ENCODE measurements at regions of chr2 and their contacts with region 1.

Region 1: DNA sequence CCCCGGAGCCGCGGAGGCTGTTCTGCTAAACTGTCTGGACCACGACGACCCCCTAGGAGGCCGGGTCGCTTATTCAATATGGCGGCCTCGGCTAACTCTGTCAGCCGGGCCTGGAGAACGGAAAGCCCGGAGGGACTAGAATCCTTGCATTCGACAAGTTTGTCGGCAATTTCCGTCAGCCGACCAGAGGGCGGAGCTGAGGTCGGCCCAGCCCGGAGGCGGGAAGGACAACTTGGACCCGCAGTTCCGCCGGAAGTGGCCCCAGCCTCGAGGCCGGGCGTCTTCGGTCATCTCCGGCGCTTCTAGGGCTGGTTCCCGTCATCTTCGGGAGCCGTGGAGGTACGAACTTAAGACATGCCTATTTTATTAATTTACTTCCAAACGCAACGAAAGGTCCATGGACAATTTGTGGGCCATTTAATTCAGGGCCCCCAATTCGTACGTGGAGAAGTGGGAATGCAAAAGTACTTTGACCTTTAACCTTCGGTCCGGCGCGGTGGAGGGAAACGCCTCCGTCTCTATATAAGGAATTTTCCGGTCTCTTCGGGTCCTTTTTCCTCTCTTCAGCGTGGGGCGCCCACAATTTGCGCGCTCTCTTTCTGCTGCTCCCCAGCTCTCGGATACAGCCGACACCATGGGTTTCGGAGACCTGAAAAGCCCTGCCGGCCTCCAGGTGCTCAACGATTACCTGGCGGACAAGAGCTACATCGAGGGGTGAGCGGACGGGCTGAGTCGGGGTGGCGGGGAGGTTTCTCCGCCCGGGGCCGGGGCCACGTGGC is at the starts of genes EEF1B2 and NDUFS1:
- DNase-seq: peak; percentile 93 to 97
- H3K4me3 ChIP-seq: peak within 1 kb of the TSS; percentile 94 to 100 (median 97)
- H3K27ac ChIP-seq: peak within 1 kb of the TSS; percentile 85
- H3K4me1 ChIP-seq: peaks cover 0 to 4% (median 3%) of the 10 kb centered on the region in 4 experiments; a peak in 5 of 7 replicates
- H3K27me3 ChIP-seq: no peaks in the 10 kb centered on the region
- CTCF ChIP-seq: no peak
- EP300 ChIP-seq: no peak
- POLR2A ChIP-seq: peak; percentile 66 to 83
- RAD21 ChIP-seq: no peak
- total RNA-seq, gene EEF1B2: 675 and 679 TPM in 2 replicates
- total RNA-seq, gene NDUFS1: 95.9 and 97.0 TPM in 2 replicates

Region 2: GRCh38 chr2:205957452-205958154 is 201.9 kb before region 1 on chr2:
- CTCF ChIA-PET with region 1: no interaction called
- POLR2A ChIA-PET with region 1: no interaction called
- DNase-seq: no peak
- H3K4me3 ChIP-seq: no peak overlapping the region
- H3K27ac ChIP-seq: no peak overlapping the region
- H3K4me1 ChIP-seq: peaks cover 0 to 6% (median 2%) of the 10 kb centered on the region in 4 experiments; a peak in 2 of 7 replicates
- H3K27me3 ChIP-seq: no peaks in the 10 kb centered on the region
- CTCF ChIP-seq: no peak
- EP300 ChIP-seq: no peak
- POLR2A ChIP-seq: no peak
- RAD21 ChIP-seq: no peak

Region 3: DNA sequence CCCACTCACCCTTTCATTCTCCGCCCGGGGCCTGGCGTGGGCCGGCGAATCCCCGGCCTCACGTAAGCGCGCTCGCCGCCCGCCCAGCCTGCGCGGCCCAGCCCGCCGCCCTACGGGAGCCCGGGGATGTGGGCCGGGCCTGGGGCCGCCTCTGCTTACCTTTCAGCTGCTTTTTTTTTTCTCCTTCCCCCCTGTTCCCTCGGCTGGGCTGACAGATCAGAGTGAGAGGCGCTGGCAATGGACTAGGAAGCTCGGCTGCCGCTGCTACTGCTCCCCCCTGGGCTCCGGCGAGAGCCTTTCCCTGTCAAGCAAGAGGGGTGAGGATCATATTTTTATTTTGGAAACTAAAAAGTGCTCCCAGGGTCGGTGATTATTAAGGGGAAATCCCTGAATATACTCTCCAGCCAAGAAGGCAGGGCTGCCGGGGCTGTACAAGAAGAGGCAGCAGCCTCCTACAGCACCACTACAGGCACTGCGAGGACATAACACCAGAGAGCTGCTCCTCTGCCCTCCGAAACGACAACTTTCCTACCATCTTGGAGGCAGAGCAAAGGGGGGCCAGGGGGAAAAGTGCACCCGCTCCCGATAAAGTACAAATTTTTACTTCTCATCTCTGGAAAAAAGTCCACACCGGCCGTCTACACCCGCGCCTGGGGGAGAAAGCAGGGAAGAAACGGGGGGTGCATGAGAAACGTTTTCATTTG is 73.6 kb before region 1 on chr2 and contains the start of gene INO80D:
- CTCF ChIA-PET with region 1: no interaction called
- POLR2A ChIA-PET with region 1: interaction called, 19 read pairs
- DNase-seq: peak in 1 of 2 experiments; percentile 74
- H3K4me3 ChIP-seq: peak within 1 kb of the TSS; percentile 64 to 99 (median 94)
- H3K27ac ChIP-seq: peak within 1 kb of the TSS; percentile 87
- H3K4me1 ChIP-seq: peaks cover 2 to 14% (median 7%) of the 10 kb centered on the region in 4 experiments; a peak in 5 of 7 replicates
- H3K27me3 ChIP-seq: no peaks in the 10 kb centered on the region
- CTCF ChIP-seq: peak in 2 of 3 experiments; percentile 47 to 52; a peak in 2 of 4 replicates
- EP300 ChIP-seq: 0 out of 3 replicates have a peak, but pooled peaks of 1 of the 2 experiments have one; percentile 3
- POLR2A ChIP-seq: peak in 1 of 2 experiments; percentile 74; a peak in 2 of 3 replicates
- RAD21 ChIP-seq: peak; percentile 37
- total RNA-seq, gene INO80D: 37.4 and 38.9 TPM in 2 replicates

Region 4: DNA sequence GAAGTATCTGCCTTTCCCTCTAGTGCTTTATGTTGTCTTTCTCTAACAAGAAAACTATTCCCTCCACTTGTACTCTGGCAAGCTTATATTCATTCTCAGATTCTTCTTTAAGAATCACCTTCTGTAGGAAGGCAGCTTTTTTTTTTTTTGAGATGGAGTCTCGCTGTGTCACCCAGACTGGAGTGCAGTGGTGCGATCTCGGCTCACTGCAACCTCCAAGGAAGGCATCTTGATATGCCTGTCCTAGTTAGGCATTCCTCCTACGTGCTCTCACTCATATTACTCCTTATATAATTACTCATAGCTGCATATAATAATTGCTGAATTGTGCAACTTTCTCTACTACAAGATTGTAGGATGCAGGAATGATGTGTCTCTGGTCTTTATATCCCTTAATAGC is 16.1 kb before region 1 on chr2:
- CTCF ChIA-PET with region 1: no interaction called
- POLR2A ChIA-PET with region 1: interaction called, 12 read pairs
- DNase-seq: no peak
- H3K4me3 ChIP-seq: no peak overlapping the region
- H3K27ac ChIP-seq: no peak overlapping the region
- H3K4me1 ChIP-seq: no peaks in the 10 kb centered on the region
- H3K27me3 ChIP-seq: no peaks in the 10 kb centered on the region
- CTCF ChIP-seq: no peak
- EP300 ChIP-seq: no peak
- POLR2A ChIP-seq: no peak
- RAD21 ChIP-seq: no peak

Region 5: GRCh38 chr2:206189691-206190090 is 30.2 kb after region 1 on chr2:
- CTCF ChIA-PET with region 1: interaction called, 10 read pairs
- POLR2A ChIA-PET with region 1: interaction called, 5 read pairs
- DNase-seq: no peak
- H3K4me3 ChIP-seq: no peak overlapping the region
- H3K27ac ChIP-seq: no peak overlapping the region
- H3K4me1 ChIP-seq: no peaks in the 10 kb centered on the region
- H3K27me3 ChIP-seq: no peaks in the 10 kb centered on the region
- CTCF ChIP-seq: no peak
- EP300 ChIP-seq: no peak
- POLR2A ChIP-seq: no peak
- RAD21 ChIP-seq: no peak

Region 6: DNA sequence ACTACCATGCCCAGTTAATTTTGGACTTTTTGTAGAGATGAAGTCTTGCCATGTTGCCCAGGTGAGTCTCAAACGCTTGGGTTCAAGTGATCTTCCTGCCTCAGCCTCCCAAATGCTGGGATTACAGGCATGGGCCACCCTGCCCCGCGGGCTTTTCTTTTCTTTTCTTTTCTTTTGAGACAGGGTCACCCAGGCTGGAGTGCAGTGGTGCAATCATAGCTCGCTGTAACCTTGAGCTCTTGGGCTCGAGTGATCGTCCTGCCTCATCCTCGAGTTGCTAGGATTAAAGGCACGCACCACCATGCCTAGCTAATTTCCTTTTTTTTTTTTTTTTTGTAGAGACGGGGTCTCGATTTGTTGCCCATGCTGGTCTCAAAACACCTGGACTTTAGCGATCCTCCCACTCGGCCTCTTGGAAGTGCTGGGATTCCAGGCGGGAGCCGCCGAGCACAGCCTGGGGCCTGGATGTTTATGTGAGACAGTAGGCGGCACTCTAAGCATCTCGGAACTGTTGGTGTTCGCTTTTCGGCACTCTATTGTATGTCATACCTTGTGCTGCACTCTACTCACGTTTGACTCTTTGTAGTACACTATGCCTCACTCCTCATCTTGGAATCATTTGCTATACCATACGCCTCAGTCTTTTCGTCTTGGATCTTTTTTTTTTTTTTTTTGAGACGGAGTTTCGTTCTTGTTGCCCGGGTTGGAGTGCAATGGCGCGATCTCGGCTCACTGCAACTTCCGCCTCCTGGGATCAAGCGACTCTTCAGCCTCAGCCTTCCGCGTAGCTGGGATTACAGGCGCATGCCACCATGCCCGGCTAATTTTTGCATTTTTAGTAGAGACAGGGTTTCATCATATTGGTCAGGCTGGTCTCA is 90.4 kb after region 1 on chr2:
- CTCF ChIA-PET with region 1: interaction called, 11 read pairs
- POLR2A ChIA-PET with region 1: interaction called, 17 read pairs
- DNase-seq: peak in 1 of 2 experiments; percentile 65
- H3K4me3 ChIP-seq: peak overlapping the region; percentile 22 to 57 (median 46)
- H3K27ac ChIP-seq: no peak overlapping the region
- H3K4me1 ChIP-seq: peaks cover 0 to 5% (median under 1%) of the 10 kb centered on the region in 4 experiments; a peak in 2 of 7 replicates
- H3K27me3 ChIP-seq: peaks cover 27 to 54% (median 48%) of the 10 kb centered on the region in 4 experiments
- CTCF ChIP-seq: peak in 2 of 3 experiments; percentile 28 to 50; a peak in 3 of 4 replicates
- EP300 ChIP-seq: no peak
- POLR2A ChIP-seq: no peak; a peak in 1 of 3 replicates
- RAD21 ChIP-seq: peak; percentile 37 to 48

Region 7: DNA sequence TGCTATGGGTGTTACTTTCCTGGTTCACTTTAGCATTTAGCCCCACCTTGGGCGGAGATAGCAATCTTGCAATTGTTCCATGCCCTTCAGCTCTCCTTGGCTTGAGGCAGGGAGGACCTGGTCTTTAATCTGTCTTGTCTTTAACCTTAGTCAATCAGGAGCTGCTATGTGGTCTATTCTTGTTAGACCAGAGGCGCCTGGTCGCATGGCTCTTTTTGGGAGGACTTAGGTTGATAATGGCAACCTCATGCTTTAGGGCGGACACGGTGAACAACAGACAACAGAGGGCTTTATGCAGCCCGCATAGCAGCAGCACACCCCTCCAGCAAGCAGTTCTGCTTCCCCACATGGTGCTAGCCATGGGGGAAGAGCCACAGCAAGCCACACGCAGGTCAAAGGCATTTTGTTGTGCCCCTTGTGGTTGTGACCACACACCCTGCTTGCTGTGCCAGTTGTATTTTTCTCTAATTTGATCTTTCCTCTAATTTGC is 97.2 kb after region 1 on chr2:
- CTCF ChIA-PET with region 1: interaction called, 9 read pairs
- POLR2A ChIA-PET with region 1: interaction called, 17 read pairs
- DNase-seq: no peak
- H3K4me3 ChIP-seq: no peak overlapping the region
- H3K27ac ChIP-seq: no peak overlapping the region
- H3K4me1 ChIP-seq: peaks cover 3 to 12% (median 4%) of the 10 kb centered on the region in 4 experiments; a peak in 4 of 7 replicates
- H3K27me3 ChIP-seq: peaks cover 75 to 94% (median 91%) of the 10 kb centered on the region in 4 experiments
- CTCF ChIP-seq: no peak
- EP300 ChIP-seq: no peak
- POLR2A ChIP-seq: no peak
- RAD21 ChIP-seq: no peak